Activated CD4-positive, alpha-beta T cell treated with anti-CD3 and anti-CD28 coated beads, Interleukin-2, amount 10 ng/mL, durations not matched to agents 7 days and 5 days (primary cell): ENCODE measurements at regions of chr7 and their contacts with region 1.

Region 1: DNA sequence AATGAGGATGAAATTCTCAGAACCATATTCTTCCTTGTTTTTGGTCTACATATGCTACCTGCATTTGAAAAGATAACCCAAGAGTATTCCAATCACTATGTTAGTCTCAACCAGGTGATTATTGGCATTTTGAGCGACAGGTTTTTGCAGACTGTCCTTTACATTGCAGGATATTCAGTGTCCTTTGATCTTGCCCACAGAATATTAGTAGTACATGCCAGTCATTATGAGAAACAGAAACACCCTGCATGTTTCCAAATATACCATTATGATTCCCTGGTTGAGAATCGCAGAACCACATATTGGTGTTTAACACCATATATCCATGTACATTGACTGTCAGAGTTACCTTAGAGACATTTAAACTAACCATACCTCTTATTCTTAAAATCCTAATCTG is 30.6 kb downstream of the TMEM243 start:
- DNase-seq: no peak
- H3K4me3 Mint-ChIP-seq: no peak overlapping the region
- H3K27ac Mint-ChIP-seq: no peak overlapping the region
- H3K4me1 Mint-ChIP-seq: peaks cover 6% of the 10 kb centered on the region
- H3K27me3 Mint-ChIP-seq: no peaks in the 10 kb centered on the region

Region 2: GRCh38 chr7:87173471-87173870 is 15.5 kb before region 1 on chr7:
- CTCF ChIA-PET with region 1: interaction called, 13 read pairs
- POLR2A ChIA-PET with region 1: no interaction called
- DNase-seq: no peak
- H3K4me3 Mint-ChIP-seq: no peak overlapping the region
- H3K27ac Mint-ChIP-seq: no peak overlapping the region
- H3K4me1 Mint-ChIP-seq: peaks cover 10% of the 10 kb centered on the region
- H3K27me3 Mint-ChIP-seq: no peaks in the 10 kb centered on the region

Region 3: GRCh38 chr7:87225696-87226095 is 36.8 kb after region 1 on chr7:
- CTCF ChIA-PET with region 1: no interaction called
- POLR2A ChIA-PET with region 1: no interaction called
- DNase-seq: no peak
- H3K4me3 Mint-ChIP-seq: no peak overlapping the region
- H3K27ac Mint-ChIP-seq: no peak overlapping the region
- H3K4me1 Mint-ChIP-seq: peaks cover 15% of the 10 kb centered on the region
- H3K27me3 Mint-ChIP-seq: peaks cover 7% of the 10 kb centered on the region